HepG2 (cell line): ENCODE measurements at regions of chr16 and their contacts with region 1.

Region 1: GRCh38 chr16:11742539-11743307 is at the start of gene TXNDC11:
- DNase-seq: peak; percentile 98
- ATAC-seq: peak; percentile 88
- H3K4me3 ChIP-seq: peak within 1 kb of the TSS; percentile 75 to 98 (median 97)
- H3K27ac ChIP-seq: peak within 1 kb of the TSS; percentile 94
- H3K4me1 ChIP-seq: peaks cover 84% of the 10 kb centered on the region
- H3K27me3 ChIP-seq: no peaks in the 10 kb centered on the region; a peak in 1 of 5 replicates
- CTCF ChIP-seq: no peak; the same call in 1 of the 2 replicates
- EP300 ChIP-seq: peak in 1 of 2 experiments; percentile 63
- POLR2A ChIP-seq: peak; percentile 96 to 98
- RAD21 ChIP-seq: peak; percentile 89
- total RNA-seq, gene TXNDC11: 46.4 and 74.9 TPM in 2 replicates

Region 2: DNA sequence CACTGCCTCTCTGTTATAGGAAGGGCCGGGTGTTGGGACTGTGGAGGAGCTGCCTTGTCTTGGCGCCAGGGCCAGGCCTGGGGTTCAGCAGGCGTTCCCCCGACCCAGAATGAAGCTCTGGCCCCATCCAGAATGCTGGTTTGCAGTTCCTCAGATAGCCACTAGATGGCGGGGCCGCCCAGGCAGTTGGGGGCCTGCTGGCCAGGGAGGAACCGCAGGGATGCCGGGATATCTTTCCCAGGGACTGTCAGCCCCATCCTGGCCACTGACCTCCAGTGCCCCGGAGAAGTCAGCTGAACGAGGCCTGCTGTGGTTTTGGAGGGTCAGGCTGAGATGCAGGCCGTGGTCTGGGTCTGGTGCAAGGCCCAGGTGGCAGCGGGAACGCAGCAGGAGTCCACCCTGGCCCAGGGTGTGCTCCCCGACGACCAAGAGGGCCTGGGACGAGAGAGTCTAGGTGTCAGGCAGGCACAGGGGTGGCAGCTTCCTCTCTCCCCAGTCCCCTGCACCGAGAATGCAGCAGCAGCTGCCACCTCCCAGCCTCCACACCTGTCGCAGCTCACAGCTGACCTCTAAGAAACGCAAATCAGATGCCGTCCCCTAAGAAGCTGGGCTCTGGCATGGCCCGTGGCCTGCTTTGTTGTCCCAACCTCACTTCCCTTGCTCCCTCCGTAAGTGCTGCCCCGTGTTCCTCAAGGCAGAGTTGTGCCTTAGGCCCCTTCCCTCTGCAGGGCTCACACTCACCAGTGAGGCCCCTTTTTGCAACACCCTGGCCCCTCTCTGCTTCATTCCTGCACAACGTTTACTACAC is 346.3 kb before region 1 on chr16:
- CTCF ChIA-PET with region 1: no interaction called
- POLR2A ChIA-PET with region 1: interaction called, 11 read pairs
- in situ Hi-C with region 1: no loop called
- intact Hi-C with region 1: no loop called
- DNase-seq: peak; percentile 76
- ATAC-seq: peak; percentile 85
- H3K4me3 ChIP-seq: peak overlapping the region; percentile 53 to 79 (median 57)
- H3K27ac ChIP-seq: no peak overlapping the region
- H3K4me1 ChIP-seq: peaks cover 44% of the 10 kb centered on the region
- H3K27me3 ChIP-seq: peaks cover 48 to 74% of the 10 kb centered on the region in 2 experiments
- CTCF ChIP-seq: peak; percentile 100
- EP300 ChIP-seq: peak; percentile 23 to 34; a peak in 2 of 4 replicates
- POLR2A ChIP-seq: no peak
- RAD21 ChIP-seq: peak; percentile 99

Region 3: GRCh38 chr16:11689031-11689761 is 53.5 kb before region 1 on chr16:
- CTCF ChIA-PET with region 1: no interaction called
- POLR2A ChIA-PET with region 1: no interaction called
- in situ Hi-C with region 1: no loop called
- intact Hi-C with region 1: no loop called
- DNase-seq: no peak
- ATAC-seq: no peak
- H3K4me3 ChIP-seq: no peak overlapping the region
- H3K27ac ChIP-seq: peak overlapping the region; percentile 22
- H3K4me1 ChIP-seq: peaks cover 15% of the 10 kb centered on the region
- H3K27me3 ChIP-seq: no peaks in the 10 kb centered on the region
- CTCF ChIP-seq: no peak
- EP300 ChIP-seq: no peak
- POLR2A ChIP-seq: no peak
- RAD21 ChIP-seq: no peak

Region 4: DNA sequence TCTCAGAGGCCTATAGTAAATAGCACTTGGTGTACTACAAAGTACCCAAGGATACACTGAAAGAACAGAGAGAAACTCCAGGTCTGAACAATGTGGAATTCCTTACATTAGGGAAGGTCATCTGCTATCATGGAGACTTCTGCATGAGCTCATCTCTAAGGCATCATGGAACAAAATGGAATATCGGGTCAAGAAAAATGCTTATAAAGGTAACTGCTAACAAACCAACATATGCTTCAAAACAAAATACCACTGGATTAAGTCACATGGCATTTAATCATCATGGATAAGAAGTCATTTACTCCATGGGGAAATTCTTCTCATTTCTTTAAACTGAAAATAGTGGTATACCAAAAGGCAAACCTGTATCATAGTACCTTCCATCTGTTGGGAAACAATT is 34.3 kb before region 1 on chr16:
- CTCF ChIA-PET with region 1: no interaction called
- POLR2A ChIA-PET with region 1: interaction called, 13 read pairs
- in situ Hi-C with region 1: no loop called
- intact Hi-C with region 1: no loop called
- DNase-seq: no peak
- ATAC-seq: peak; percentile 18; the same call in 1 of the 3 replicates
- H3K4me3 ChIP-seq: no peak overlapping the region
- H3K27ac ChIP-seq: no peak overlapping the region
- H3K4me1 ChIP-seq: peaks cover 12% of the 10 kb centered on the region
- H3K27me3 ChIP-seq: no peaks in the 10 kb centered on the region
- CTCF ChIP-seq: no peak
- EP300 ChIP-seq: no peak
- POLR2A ChIP-seq: no peak
- RAD21 ChIP-seq: no peak

Region 5: GRCh38 chr16:11757671-11758545 is 15.2 kb after region 1 on chr16:
- CTCF ChIA-PET with region 1: no interaction called
- POLR2A ChIA-PET with region 1: interaction called, 74 read pairs
- in situ Hi-C with region 1: no loop called
- intact Hi-C with region 1: no loop called
- DNase-seq: peak; percentile 32
- ATAC-seq: peak; percentile 58
- H3K4me3 ChIP-seq: no peak overlapping the region
- H3K27ac ChIP-seq: peak overlapping the region; percentile 43
- H3K4me1 ChIP-seq: peaks cover 67% of the 10 kb centered on the region
- H3K27me3 ChIP-seq: no peaks in the 10 kb centered on the region
- CTCF ChIP-seq: no peak
- EP300 ChIP-seq: peak in 1 of 2 experiments; percentile 10; a peak in 1 of 4 replicates
- POLR2A ChIP-seq: no peak
- RAD21 ChIP-seq: no peak

Region 6: GRCh38 chr16:11797166-11797956 is 54.6 kb after region 1 on chr16 and contains the start of gene ZC3H7A:
- CTCF ChIA-PET with region 1: no interaction called
- POLR2A ChIA-PET with region 1: interaction called, 207 read pairs
- in situ Hi-C with region 1: no loop called
- intact Hi-C with region 1: no loop called
- DNase-seq: peak; percentile 98
- ATAC-seq: peak; percentile 96
- H3K4me3 ChIP-seq: peak within 1 kb of the TSS; percentile 79 to 100 (median 91)
- H3K27ac ChIP-seq: peak within 1 kb of the TSS; percentile 85
- H3K4me1 ChIP-seq: peaks cover 78% of the 10 kb centered on the region
- H3K27me3 ChIP-seq: no peaks in the 10 kb centered on the region; a peak in 1 of 5 replicates
- CTCF ChIP-seq: peak; percentile 80
- EP300 ChIP-seq: 0 out of 4 replicates have a peak, but pooled peaks of 1 of the 2 experiments have one; percentile 5
- POLR2A ChIP-seq: peak; percentile 100
- RAD21 ChIP-seq: peak; percentile 90
- total RNA-seq, gene ZC3H7A: 29.2 and 51.5 TPM in 2 replicates

Region 7: GRCh38 chr16:11851294-11852091 is 108.8 kb after region 1 on chr16 and contains the start of gene RSL1D1:
- CTCF ChIA-PET with region 1: no interaction called
- POLR2A ChIA-PET with region 1: interaction called, 16 read pairs
- in situ Hi-C with region 1: no loop called
- intact Hi-C with region 1: no loop called
- DNase-seq: peak; percentile 94
- ATAC-seq: peak; percentile 87
- H3K4me3 ChIP-seq: peak within 1 kb of the TSS; percentile 80 to 99 (median 99)
- H3K27ac ChIP-seq: peak within 1 kb of the TSS; percentile 87
- H3K4me1 ChIP-seq: peaks cover 63% of the 10 kb centered on the region
- H3K27me3 ChIP-seq: no peaks in the 10 kb centered on the region; a peak in 2 of 5 replicates
- CTCF ChIP-seq: no peak
- EP300 ChIP-seq: peak in 1 of 2 experiments; percentile 38; a peak in 3 of 4 replicates
- POLR2A ChIP-seq: peak; percentile 99
- RAD21 ChIP-seq: peak; percentile 7; the same call in 1 of the 2 replicates
- total RNA-seq, gene RSL1D1: 343 and 502 TPM in 2 replicates